Posterior vena cava (tissue), 2 donors: ENCODE measurements at regions of chr17 and their contacts with region 1.

Region 1: GRCh38 chr17:55770148-55770870 is 19.5 kb downstream of the PCTP start:
- DNase-seq: no peak

Region 2: DNA sequence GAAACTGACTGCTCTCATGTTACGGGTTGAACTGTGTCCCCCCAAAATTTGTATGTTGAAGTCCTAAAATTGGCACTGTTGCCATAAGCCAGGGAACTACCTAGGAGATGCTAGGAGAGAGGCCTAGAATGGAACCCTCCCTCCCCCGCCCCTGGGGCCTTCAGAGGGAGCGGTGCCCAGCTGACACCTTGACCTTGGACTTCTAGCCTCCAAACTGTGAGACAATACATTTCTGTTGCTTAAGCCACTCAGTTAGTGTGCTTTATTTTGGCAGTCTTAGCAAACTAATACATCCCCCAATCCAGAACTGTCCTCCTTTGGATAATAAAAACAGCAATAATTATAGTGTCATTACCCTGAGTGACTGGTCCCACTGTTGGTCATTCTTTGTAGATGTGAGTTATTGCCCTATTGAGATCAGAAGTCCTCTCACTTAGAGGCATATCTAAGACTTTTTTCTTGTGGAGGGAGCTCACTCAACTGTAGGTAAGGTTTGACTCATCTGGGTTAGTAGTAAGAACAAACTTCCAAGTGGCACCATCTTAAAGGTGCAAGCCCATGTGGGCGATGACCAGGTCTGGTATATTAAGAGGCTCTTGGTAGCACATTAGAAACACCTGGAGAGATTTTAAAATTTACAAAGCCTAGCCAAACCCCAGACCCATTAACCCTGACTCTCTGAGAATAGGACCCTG is 598.5 kb before region 1 on chr17:
- intact Hi-C with region 1: loop called in 1 of 2 experiments (anchors 5 kb)
- DNase-seq: no peak

Region 3: GRCh38 chr17:55527540-55528118 is 242.7 kb before region 1 on chr17:
- intact Hi-C with region 1: loop called (anchors 2 to 10 kb)
- DNase-seq: no peak

Region 4: GRCh38 chr17:55794725-55795482 is 24.6 kb after region 1 on chr17:
- intact Hi-C with region 1: no loop called
- DNase-seq: no peak

Region 5: DNA sequence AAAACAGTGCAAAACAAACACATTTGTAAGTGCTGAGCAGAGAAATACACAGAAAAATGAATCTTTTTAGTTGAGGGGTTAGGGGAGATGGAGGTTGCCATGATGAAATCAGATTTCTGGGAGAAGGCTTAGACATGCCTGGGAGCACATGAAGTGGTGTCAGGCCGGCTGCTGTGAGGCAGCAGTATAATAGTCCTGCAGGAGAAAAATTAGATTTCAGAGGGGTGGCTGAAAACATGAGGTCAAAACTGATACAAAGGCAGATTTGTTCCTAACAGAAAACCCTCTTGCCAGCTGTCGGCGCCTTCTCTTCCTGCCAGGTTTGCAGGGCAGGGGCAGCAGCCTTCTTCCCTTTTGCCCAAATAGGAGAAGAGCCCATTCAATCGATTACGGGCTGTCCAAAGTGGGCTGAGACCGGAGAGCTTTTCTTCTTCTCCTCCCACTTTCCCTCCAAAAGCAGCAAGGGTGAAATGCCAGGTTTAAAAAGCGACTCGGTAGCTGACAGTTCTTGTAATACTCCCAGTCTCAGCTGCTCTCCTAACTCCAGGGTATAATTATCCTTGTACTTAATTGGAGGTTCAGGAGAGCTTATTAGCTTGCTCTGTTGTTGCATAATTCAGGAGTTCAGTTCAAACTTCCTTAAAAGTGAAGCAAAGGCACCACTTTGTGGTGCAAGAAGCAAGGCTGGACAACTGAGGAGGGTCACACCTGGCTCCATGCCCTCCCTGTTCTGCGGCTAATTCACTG is 60.6 kb after region 1 on chr17:
- intact Hi-C with region 1: no loop called
- DNase-seq: no peak